ENCODE measurements at regions of chr10 and their contacts with region 1.

Region 1: DNA sequence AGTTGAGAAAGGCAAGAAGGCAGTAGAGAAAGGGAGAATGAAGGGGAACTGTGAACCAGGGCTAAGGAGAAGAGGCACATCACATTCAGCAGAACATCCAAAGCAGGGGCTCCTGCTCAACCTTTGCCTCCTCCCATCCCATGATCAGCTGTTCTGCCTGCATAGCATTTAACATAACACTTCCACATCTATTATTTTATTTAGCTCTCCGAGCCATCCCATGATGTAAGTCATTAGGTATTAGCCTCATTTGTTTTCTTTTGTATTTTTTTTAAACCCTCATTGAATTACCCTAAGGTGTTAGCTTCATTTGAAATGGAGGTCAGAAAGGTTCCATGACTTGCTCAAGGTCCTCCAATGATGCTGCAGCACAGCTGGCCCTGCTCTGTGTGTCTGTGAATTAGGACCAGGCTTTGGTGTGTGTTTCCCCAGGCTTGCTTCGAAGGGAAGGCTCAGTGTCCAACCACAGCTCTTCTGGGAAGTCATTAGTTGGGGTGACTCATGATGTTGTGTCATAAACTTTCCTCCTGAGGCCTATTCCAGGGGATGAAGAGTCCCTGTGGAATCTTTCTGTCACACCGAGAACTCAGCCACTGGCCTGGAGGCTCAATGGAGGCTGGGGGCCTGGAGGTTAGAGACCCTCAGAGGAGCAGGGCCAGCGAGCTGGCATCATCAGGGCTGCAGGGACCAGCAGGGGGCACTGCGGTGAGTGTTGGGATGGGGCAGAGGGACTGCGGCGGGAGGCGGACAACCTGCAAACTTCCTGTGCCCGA is 16.5 kb downstream of the NPFFR1 start:
- DNase-seq: peak in 1 of 2 donors; percentile 22
- H3K4me3 ChIP-seq: no peak overlapping the region
- H3K27ac ChIP-seq: peak overlapping the region; percentile 33 to 66
- H3K4me1 ChIP-seq: no peaks in the 10 kb centered on the region
- H3K27me3 ChIP-seq: no peaks in the 10 kb centered on the region
- CTCF ChIP-seq: no peak
- POLR2A ChIP-seq: no peak

Region 2: GRCh38 chr10:70679498-70679897 is 412.2 kb after region 1 on chr10:
- intact Hi-C with region 1: loop called (anchors 5 kb)
- DNase-seq: no peak
- H3K4me3 ChIP-seq: no peak overlapping the region
- H3K27ac ChIP-seq: no peak overlapping the region
- H3K4me1 ChIP-seq: no peaks in the 10 kb centered on the region
- H3K27me3 ChIP-seq: peaks cover 0 to 5% of the 10 kb centered on the region in 2 donors
- CTCF ChIP-seq: no peak
- POLR2A ChIP-seq: no peak